ENCODE measurements at regions of chr6 and their contacts with region 1.

Region 1: DNA sequence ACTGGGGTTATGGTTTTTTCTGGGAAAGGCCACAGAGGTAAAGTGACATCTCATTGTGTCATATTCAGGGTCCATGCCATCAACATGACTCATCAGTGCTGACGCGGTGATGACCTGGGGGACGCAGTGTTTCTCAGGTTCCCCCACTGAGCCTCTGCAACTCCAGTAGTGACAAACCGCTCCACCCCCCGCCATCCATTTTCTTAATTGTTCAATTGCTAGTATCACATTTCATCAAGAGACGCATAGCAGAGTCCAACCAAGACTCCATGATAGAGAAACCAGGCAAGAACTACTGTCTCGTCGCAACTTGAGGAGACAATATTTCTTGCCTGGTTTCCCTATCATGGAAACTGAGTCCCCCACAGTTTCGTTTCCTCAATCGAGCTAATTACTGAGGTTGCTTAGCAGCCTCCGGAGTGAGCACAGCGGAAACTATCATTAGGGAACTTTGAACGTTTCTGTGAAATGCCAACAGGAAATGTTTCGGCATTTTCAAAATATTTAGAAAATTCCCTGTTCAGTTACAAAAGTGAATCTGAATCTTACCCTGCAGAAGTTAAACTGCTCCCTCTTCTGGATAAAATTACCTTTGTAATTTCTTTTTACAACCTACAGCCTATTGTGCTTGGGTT is 12.2 kb upstream of the SERPINB1 start:
- DNase-seq: peak; percentile 85
- H3K4me3 ChIP-seq: peak overlapping the region in 1 of 3 experiments; percentile 57
- H3K27ac ChIP-seq: peak overlapping the region; percentile 96
- H3K4me1 ChIP-seq: peaks cover 68% of the 10 kb centered on the region
- H3K27me3 ChIP-seq: no peaks in the 10 kb centered on the region
- CTCF ChIP-seq: peak; percentile 11 to 30
- POLR2A ChIP-seq: no peak

Region 2: DNA sequence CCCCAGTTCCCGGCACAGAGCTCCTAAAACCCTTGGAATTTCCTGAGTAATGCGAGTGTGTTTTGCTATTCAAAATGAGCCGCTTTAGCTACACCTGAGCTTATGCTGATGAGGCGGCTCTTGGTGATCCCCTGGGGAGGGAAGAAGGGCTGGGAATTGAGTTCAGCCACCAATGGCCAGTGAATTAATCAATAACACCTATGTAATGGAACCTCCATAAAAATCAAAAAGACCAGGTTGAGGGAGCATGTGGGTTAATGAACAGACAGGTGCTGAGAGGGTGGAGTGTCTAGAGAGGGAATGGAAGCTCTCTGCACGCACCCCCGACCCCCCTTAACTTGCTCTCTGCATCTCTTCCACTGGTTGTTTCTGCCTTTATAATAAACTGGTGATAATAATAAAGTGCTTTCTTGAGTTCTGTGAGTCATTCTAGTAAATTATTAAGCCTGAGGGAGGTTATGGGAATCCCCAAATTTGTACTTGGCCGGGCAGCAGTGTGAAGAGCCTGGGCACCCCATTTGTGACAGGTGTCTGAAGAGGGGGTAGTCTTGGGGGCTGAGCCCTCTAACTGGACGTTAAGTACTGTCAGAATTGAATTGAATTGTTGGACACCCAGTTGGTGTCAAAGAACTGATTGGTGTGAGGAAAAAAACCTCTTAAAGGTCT is 12.4 kb after region 1 on chr6:
- CTCF ChIA-PET with region 1: interaction called, 14 read pairs
- POLR2A ChIA-PET with region 1: interaction called, 4 read pairs
- dilution Hi-C with region 1: no loop called
- intact Hi-C with region 1: loop called (anchors 1 kb)
- DNase-seq: peak; percentile 36
- H3K4me3 ChIP-seq: no peak overlapping the region
- H3K27ac ChIP-seq: peak overlapping the region; percentile 65
- H3K4me1 ChIP-seq: peaks cover 12% of the 10 kb centered on the region
- H3K27me3 ChIP-seq: no peaks in the 10 kb centered on the region
- CTCF ChIP-seq: no peak
- POLR2A ChIP-seq: no peak

Region 3: GRCh38 chr6:2876210-2877056 is 22.6 kb after region 1 on chr6:
- CTCF ChIA-PET with region 1: interaction called, 13 read pairs
- POLR2A ChIA-PET with region 1: interaction called, 3 read pairs
- dilution Hi-C with region 1: no loop called
- intact Hi-C with region 1: loop called (anchors 1 kb)
- DNase-seq: peak; percentile 98
- H3K4me3 ChIP-seq: peak overlapping the region in 2 of 3 experiments; percentile 28 to 53
- H3K27ac ChIP-seq: peak overlapping the region; percentile 91
- H3K4me1 ChIP-seq: peaks cover 29% of the 10 kb centered on the region
- H3K27me3 ChIP-seq: no peaks in the 10 kb centered on the region
- CTCF ChIP-seq: no peak
- POLR2A ChIP-seq: peak; percentile 55

Region 4: GRCh38 chr6:2891768-2892170 is 37.9 kb after region 1 on chr6:
- CTCF ChIA-PET with region 1: interaction called, 4 read pairs
- POLR2A ChIA-PET with region 1: interaction called, 15 read pairs
- dilution Hi-C with region 1: no loop called
- intact Hi-C with region 1: no loop called
- DNase-seq: no peak
- H3K4me3 ChIP-seq: no peak overlapping the region
- H3K27ac ChIP-seq: no peak overlapping the region
- H3K4me1 ChIP-seq: no peaks in the 10 kb centered on the region
- H3K27me3 ChIP-seq: no peaks in the 10 kb centered on the region
- CTCF ChIP-seq: no peak
- POLR2A ChIP-seq: no peak

Region 5: GRCh38 chr6:2900821-2901644 is 47.2 kb after region 1 on chr6:
- CTCF ChIA-PET with region 1: interaction called, 5 read pairs
- POLR2A ChIA-PET with region 1: interaction called, 3 read pairs
- dilution Hi-C with region 1: no loop called
- intact Hi-C with region 1: loop called (anchors 1 kb)
- DNase-seq: peak; percentile 41
- H3K4me3 ChIP-seq: peak overlapping the region; percentile 22 to 91 (median 66)
- H3K27ac ChIP-seq: no peak overlapping the region
- H3K4me1 ChIP-seq: peaks cover 15% of the 10 kb centered on the region
- H3K27me3 ChIP-seq: no peaks in the 10 kb centered on the region
- CTCF ChIP-seq: no peak
- POLR2A ChIP-seq: no peak